Activated B cell treated with CpG ODN at 0.5 μM for 24 hours (primary cell): ENCODE measurements at regions of chr3 and their contacts with region 1.

Region 1: GRCh38 chr3:186790261-186790981 is 7.0 kb downstream of the EIF4A2 start:
- DNase-seq: no peak
- ATAC-seq: no peak
- H3K4me3 Mint-ChIP-seq: no peak overlapping the region
- H3K27ac Mint-ChIP-seq: peak overlapping the region; percentile 56
- H3K4me1 Mint-ChIP-seq: peaks cover 40% of the 10 kb centered on the region
- H3K27me3 Mint-ChIP-seq: no peaks in the 10 kb centered on the region
- CTCF ChIP-seq: no peak

Region 2: DNA sequence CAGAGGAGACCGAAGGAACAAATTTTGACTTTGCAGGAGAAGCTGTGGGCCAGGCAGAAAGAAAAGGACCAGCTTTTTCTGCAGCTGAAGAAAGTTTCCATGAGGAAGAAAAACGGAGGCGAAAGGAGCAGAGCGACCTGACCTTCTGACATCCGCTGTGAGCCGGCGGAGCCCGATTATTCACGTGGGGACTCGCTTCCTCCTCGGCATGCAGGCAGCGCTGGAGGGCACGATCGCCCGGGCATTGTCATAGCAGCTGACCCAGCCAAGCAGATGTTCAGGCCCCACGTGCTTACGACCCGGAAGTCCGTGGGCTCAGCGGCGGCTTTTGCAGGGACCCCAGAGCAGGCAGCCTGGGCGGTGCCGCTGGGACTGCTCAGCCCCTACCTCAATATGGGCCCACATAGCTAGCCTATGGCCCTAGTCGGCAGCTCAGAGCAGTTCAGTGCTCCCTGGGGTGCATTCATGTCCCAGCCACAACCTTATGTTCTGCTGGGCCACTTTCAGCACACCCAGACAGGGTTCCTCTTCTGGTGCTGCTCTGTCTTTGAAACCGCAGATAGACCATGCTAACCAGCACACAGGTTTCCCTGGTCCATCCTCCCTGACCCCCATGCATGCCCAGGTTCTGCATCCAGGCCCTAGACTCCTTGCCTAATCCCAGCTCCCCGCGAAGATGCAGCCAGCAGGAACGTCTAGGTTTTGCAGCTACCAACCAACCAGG is 17.6 kb before region 1 on chr3:
- CTCF ChIA-PET with region 1: no interaction called
- POLR2A ChIA-PET with region 1: interaction called, 258 read pairs
- intact Hi-C with region 1: no loop called
- DNase-seq: peak; percentile 67
- ATAC-seq: peak; percentile 94
- H3K4me3 Mint-ChIP-seq: peak overlapping the region; percentile 96
- H3K27ac Mint-ChIP-seq: peak overlapping the region; percentile 96
- H3K4me1 Mint-ChIP-seq: peaks cover 23% of the 10 kb centered on the region
- H3K27me3 Mint-ChIP-seq: no peaks in the 10 kb centered on the region
- CTCF ChIP-seq: no peak

Region 3: DNA sequence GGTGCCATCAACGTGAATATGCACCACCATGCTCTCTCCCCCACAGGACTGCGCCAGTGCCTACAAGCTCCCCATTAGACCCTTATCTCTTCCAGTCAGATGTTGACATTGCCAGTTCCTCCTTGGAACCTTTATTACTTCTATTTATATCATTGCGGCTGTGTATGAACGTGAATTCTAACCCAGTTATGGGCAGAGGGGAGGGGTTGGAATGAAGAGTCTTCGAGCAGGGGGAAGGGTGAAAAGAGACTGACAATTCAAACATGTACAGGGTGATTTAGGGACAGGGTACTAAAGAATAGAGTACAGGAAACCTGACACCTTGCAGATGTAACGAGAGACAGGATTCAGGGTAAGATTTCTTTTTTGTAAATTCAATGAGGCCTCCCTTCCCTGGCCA is 98.1 kb after region 1 on chr3:
- CTCF ChIA-PET with region 1: no interaction called
- POLR2A ChIA-PET with region 1: no interaction called
- intact Hi-C with region 1: no loop called
- DNase-seq: no peak
- ATAC-seq: no peak
- H3K4me3 Mint-ChIP-seq: no peak overlapping the region
- H3K27ac Mint-ChIP-seq: no peak overlapping the region
- H3K4me1 Mint-ChIP-seq: no peaks in the 10 kb centered on the region
- H3K27me3 Mint-ChIP-seq: peaks cover 4% of the 10 kb centered on the region
- CTCF ChIP-seq: no peak